Posterior cingulate gyrus (tissue), 11 donors: ENCODE measurements at regions of chr10 and their contacts with region 1.

Region 1: GRCh38 chr10:61896854-61897661 is 4.4 kb upstream of the ARID5B start:
- DNase-seq: peak in 6 of 10 donors; percentile 10 to 85 (median 38)

Region 2: GRCh38 chr10:61423178-61423577 is 473.9 kb before region 1 on chr10:
- intact Hi-C with region 1: no loop called
- DNase-seq: no peak

Region 3: DNA sequence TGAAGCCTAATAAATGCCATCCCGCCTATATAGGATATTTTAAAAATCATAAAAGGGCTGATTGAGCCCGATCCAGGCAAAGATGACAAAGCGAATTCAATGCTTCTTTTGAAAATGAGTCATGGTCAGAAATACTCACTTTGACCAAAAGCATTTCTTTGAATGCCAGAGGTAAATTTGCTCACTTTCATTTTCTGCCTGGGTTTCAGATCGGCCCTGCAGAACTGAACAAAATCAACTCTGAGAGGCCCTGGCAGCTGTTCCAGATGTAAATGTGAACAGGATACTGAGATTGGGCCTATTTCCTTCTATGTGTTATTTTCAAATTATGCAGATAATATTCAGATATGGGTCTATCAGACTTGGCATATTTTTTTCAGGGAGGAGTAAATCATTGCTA is 110.3 kb before region 1 on chr10:
- intact Hi-C with region 1: no loop called
- DNase-seq: no peak

Region 4: DNA sequence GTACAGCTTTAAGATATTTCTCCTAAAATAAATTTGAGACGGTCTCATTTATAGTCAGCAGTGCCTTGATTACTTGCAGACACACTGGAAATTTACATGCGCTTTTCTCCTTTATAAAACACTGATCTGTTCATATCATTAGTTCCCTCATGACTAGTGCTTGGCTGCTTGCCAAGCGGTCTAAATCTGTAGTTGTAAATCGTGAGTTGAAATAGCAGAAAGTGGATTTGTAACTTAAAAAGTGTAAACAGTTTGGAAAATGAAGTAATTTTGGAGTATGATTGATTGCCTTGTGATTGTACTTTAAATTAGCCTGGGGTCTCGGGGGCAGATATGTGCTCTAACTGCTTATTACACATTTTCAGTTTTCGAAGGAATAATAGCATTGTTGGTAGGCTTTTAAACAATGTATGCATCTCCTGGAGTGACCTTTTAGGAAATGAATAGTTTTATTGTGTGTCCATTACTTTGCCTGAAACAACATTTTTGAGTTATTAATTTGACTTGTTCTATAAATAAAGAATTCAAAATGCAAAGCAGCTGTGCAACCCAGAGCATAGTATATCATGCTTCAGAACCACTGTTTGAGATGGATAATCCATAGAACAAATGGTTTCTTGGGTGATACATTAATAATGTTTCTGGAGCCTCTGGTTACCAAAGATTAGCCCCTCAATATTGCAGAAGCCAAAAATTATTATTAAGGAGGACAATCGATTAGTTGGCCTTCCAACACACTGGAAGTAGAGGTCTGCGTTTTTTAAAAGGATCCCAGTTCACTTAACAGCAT is 77.7 kb after region 1 on chr10:
- intact Hi-C with region 1: loop called (anchors 5 kb)
- DNase-seq: peak in 6 of 10 donors; percentile 16 to 72 (median 45)

Region 5: DNA sequence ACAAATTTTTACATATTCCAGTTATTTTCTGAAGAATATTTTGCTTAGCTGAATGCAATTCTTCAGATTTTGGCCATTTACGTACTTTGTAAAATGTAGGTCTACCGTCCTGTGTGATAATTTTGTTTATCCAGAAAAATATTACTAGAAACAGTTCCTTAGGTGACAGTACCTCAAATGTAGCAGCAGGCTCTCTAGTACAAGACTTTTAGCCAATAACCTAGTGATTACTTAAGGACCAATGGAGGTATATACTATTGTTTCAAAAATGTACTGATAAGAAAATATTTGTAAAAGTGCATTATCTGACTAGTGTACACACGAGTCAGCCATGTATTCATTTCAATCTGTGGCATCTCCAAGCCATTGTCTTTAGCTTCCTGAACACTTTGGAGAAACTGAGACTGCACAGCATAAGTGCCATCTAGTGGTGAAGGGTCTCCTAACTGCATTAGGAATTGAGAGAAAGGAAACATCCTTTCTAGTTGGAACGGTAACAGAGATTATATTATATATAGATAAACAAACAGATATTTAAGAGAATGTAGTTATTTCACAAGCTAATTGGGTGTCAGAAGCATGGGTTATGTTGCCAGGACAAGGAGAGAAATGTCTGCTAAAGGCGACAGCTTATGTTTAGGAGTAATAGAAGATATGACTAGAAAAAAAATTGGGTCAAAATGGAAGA is 347.9 kb after region 1 on chr10:
- intact Hi-C with region 1: loop called (anchors 2 kb)
- DNase-seq: peak in 5 of 10 donors; percentile 23 to 57 (median 41)